Activated naive CD4-positive, alpha-beta T cell treated with anti-CD3 and anti-CD28 coated beads for 36 hours (primary cell): ENCODE measurements at regions of chr3 and their contacts with region 1.

Region 1: GRCh38 chr3:137013955-137014688 is 56.3 kb downstream of the IL20RB start:
- DNase-seq: peak; percentile 89
- H3K4me3 Mint-ChIP-seq: peak overlapping the region; percentile 70
- H3K27ac Mint-ChIP-seq: no peak overlapping the region
- H3K4me1 Mint-ChIP-seq: peaks cover 6% of the 10 kb centered on the region
- H3K27me3 Mint-ChIP-seq: no peaks in the 10 kb centered on the region

Region 2: DNA sequence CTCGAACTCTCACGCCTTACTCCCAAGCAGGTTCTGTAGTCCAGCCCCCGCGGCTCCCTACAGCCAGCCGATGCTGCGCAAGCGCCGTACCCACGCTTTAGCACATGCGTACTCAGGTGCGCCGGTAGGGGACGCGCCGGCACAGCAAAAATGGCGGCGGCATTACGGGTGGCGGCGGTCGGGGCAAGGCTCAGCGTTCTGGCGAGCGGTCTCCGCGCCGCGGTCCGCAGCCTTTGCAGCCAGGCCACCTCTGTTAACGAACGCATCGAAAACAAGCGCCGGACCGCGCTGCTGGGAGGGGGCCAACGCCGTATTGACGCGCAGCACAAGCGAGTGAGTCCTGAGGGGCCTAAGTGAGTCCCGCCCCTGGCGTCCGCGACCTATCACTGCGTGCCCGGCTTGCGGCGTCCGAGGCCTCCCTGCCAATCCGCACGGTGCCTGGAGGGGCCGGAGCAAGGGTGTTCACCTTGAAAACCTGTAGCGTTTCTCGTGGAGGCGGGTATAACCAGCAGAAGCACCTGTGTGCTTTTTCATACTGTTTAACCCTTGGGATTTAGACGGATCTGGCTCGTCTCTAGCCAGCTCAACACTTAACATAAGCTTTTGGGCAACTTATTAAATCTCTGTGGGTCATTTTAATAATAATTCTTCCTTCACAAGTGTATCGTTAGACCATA is 763.8 kb before region 1 on chr3 and contains the start of gene PCCB:
- CTCF ChIA-PET with region 1: no interaction called
- intact Hi-C with region 1: loop called (anchors 1 kb)
- DNase-seq: peak; percentile 95
- H3K4me3 Mint-ChIP-seq: peak within 1 kb of the TSS; percentile 83
- H3K27ac Mint-ChIP-seq: peak within 1 kb of the TSS; percentile 90
- H3K4me1 Mint-ChIP-seq: peaks cover 18% of the 10 kb centered on the region
- H3K27me3 Mint-ChIP-seq: no peaks in the 10 kb centered on the region
- total RNA-seq, gene PCCB: 86.0 to 87.6 TPM

Region 3: DNA sequence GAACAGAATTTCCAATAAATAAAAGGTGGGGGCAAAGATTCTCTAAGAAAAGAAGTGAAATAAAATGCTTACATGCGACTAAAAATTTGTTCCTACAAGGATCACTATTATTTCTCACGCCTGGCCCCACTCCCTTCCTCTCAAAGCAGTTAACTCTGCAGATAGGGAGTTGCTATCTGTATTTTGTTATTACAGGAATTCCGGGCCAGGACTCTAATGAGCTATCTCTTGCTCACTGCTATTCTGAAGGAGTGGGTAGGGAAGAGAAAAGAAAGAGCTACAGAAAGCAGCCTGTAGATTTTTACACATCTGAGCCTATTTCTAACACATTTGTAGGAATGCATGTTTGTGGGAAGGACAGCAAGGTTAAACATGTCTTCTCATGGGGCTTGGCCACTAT is 623.5 kb before region 1 on chr3:
- CTCF ChIA-PET with region 1: interaction called, 21 read pairs
- intact Hi-C with region 1: loop called (anchors 1 kb)
- DNase-seq: no peak
- H3K4me3 Mint-ChIP-seq: no peak overlapping the region
- H3K27ac Mint-ChIP-seq: no peak overlapping the region
- H3K4me1 Mint-ChIP-seq: no peaks in the 10 kb centered on the region
- H3K27me3 Mint-ChIP-seq: no peaks in the 10 kb centered on the region

Region 4: GRCh38 chr3:136818769-136819391 is 195.2 kb before region 1 on chr3 and contains the start of gene SLC35G2:
- CTCF ChIA-PET with region 1: interaction called, 8 read pairs
- intact Hi-C with region 1: loop called (anchors 1 kb)
- DNase-seq: peak; percentile 38
- H3K4me3 Mint-ChIP-seq: peak within 1 kb of the TSS; percentile 69
- H3K27ac Mint-ChIP-seq: no peak within 1 kb of the TSS
- H3K4me1 Mint-ChIP-seq: peaks cover 19% of the 10 kb centered on the region
- H3K27me3 Mint-ChIP-seq: peaks cover 39% of the 10 kb centered on the region
- total RNA-seq, gene SLC35G2: 0.31 TPM in 1 of 2 experiments, not detected in the other

Region 5: DNA sequence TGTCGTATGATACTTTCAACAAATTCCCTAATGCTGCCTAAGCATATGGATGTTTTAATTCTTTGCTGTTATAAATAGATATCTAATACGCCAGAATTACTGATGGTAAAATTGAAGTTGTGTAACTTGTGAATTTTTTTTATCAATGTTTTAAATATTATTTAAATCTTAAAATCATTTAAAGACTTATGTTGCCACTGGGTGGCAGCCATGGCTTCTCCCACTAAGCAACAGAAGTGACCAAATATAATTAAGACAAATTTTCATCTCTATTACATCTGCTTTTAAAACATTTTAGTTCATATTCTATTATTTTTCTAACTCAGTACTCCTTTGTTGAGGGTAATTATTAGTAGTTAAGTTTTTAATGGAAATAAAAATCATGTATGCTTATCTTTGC is 64.4 kb before region 1 on chr3:
- CTCF ChIA-PET with region 1: interaction called, 8 read pairs
- intact Hi-C with region 1: loop called (anchors 5 kb)
- DNase-seq: no peak
- H3K4me3 Mint-ChIP-seq: no peak overlapping the region
- H3K27ac Mint-ChIP-seq: no peak overlapping the region
- H3K4me1 Mint-ChIP-seq: peaks cover 13% of the 10 kb centered on the region
- H3K27me3 Mint-ChIP-seq: no peaks in the 10 kb centered on the region

Region 6: GRCh38 chr3:137024348-137024747 is 10.2 kb after region 1 on chr3:
- CTCF ChIA-PET with region 1: interaction called, 11 read pairs
- intact Hi-C with region 1: no loop called
- DNase-seq: no peak
- H3K4me3 Mint-ChIP-seq: no peak overlapping the region
- H3K27ac Mint-ChIP-seq: no peak overlapping the region
- H3K4me1 Mint-ChIP-seq: no peaks in the 10 kb centered on the region
- H3K27me3 Mint-ChIP-seq: peaks cover 2% of the 10 kb centered on the region

Region 7: DNA sequence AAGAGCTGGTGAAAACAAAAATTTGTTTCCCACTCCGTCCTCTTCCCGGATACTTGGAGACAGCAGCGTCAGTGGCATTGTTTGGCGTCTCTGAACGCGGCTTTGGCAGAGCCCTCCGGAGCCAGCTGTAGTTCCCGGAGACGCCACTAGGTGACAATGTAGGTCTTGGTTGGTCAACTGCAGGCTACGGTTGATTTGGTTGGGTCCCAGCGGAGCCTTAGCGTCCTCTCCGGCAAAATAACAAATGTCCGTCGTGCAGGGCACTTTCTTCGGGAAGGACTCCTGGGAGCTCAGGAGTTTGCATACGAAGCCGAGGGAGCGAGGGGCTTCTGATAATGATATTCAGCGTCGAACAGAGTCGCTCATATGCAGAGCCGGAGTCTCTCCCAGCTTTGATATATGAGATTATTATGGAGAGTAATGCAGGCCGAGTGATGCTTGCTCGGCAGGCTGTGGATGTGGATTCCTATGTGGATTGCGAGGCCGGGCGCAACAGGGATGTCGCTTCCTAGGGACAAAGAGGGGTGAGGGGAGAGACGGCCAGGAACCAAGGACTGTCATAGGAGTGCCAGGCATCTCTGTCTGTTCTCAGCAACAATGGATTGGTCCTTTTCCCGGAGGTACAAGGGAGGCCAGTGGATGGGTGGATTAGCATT is 18.5 kb after region 1 on chr3:
- CTCF ChIA-PET with region 1: interaction called, 12 read pairs
- intact Hi-C with region 1: no loop called
- DNase-seq: peak; percentile 91
- H3K4me3 Mint-ChIP-seq: peak overlapping the region; percentile 40
- H3K27ac Mint-ChIP-seq: no peak overlapping the region
- H3K4me1 Mint-ChIP-seq: peaks cover 7% of the 10 kb centered on the region
- H3K27me3 Mint-ChIP-seq: peaks cover 15% of the 10 kb centered on the region